GM18951 (cell line): ENCODE measurements at regions of chr14 and their contacts with region 1.

Region 1: DNA sequence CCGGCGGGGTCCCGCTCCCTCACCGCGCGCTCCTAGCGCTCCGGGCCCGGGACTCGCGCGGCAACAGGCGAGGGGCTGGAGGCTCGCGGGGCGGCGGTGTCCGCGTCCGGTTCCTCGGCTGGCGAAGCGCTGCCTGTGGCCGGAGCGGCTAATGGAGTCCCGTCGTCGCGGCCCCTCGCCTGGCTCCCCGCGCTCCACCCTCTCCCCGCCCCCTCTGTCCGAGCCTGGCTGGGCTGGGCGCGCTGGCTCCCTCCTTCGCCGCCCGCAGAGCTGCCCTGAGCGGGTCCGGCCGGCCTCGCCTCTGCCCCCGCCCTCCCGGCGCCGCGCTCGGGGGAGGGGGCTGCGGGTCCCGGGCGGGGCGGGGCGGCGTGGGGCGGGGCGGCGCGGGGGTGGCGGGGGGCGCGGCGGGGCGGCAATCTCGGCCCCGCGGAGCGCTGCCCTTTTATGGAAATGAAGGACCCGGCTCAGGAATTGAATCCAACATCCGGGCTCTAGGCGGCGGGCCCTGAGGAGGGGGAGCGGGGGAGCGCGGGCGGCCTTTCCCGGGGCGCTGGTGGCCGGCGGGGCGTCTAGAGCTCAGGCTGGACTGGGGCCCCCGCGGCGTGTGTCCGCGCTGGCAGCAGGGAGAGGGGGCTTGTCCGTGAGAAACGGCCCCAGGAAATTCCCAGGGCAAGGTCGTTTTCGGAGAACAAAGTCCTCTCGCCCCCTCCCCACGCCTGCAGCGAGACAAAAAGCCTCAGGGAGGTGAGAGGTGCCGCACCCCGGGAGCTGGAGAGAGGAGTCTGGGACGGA is at the start of gene FERMT2:
- POLR2A ChIP-seq: no peak

Region 2: GRCh38 chr14:52299692-52300278 is 651.3 kb before region 1 on chr14:
- in situ Hi-C with region 1: loop called (anchors 25 kb)
- POLR2A ChIP-seq: no peak

Region 3: GRCh38 chr14:52769887-52770286 is 181.2 kb before region 1 on chr14:
- in situ Hi-C with region 1: no loop called
- POLR2A ChIP-seq: no peak

Region 4: DNA sequence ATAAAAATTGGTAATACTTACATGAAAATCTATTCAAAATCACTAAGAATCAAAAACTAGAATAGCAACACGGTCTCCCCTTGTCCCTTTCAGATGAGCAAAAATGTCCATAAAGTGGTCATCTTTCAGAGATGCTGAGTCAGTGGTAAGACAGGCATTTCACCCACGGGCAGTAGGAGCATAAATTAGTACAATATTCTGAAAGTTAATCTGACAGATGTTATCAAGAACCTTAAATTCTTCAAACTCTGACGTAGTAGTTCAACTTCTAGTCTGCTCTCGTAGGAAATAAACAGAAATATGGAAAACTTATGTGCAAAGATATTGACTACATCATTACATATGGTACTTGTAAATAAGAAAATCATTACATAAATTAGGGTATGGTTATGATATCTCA is 126.6 kb before region 1 on chr14:
- in situ Hi-C with region 1: loop called (anchors 10 kb)
- POLR2A ChIP-seq: no peak